ENCODE measurements at regions of chr1 and their contacts with region 1.

Region 1: GRCh38 chr1:214584805-214585766 is 17.9 kb upstream of the CENPF start:
- DNase-seq: peak; percentile 41 to 58
- ATAC-seq: peak; percentile 83 to 89
- H3K4me3 ChIP-seq: no peak overlapping the region
- H3K27ac ChIP-seq: peak overlapping the region; percentile 31 to 74; a peak in 4 of 6 replicates
- H3K4me1 ChIP-seq: peaks cover 38% of the 10 kb centered on the region
- CTCF ChIP-seq: peak; percentile 97
- EP300 ChIP-seq: no peak
- POLR2A ChIP-seq: no peak
- RAD21 ChIP-seq: peak; percentile 97

Region 2: DNA sequence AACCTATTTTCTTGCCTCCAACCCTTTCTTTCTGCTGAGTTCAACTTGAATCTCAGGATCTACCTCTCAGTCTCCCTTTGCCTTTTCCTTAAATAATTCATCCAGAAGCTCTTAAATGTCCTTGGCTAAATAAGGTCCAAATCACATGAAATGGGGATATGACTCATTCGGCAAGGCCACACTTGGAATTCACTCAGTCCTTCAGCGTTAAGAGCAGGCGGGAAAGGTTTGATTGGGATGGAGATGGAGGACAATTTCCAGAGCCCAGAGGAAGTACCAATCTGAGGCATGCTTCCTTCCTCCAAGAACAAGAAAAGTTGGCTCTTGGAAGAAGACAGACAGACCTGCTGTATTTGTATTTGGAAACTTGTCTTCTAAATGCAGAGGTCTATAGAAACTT is 468.8 kb before region 1 on chr1:
- CTCF ChIA-PET with region 1: no interaction called
- POLR2A ChIA-PET with region 1: no interaction called
- DNase-seq: no peak
- ATAC-seq: no peak
- H3K4me3 ChIP-seq: no peak overlapping the region
- H3K27ac ChIP-seq: no peak overlapping the region
- H3K4me1 ChIP-seq: no peaks in the 10 kb centered on the region
- CTCF ChIP-seq: no peak
- EP300 ChIP-seq: no peak
- POLR2A ChIP-seq: no peak
- RAD21 ChIP-seq: no peak

Region 3: DNA sequence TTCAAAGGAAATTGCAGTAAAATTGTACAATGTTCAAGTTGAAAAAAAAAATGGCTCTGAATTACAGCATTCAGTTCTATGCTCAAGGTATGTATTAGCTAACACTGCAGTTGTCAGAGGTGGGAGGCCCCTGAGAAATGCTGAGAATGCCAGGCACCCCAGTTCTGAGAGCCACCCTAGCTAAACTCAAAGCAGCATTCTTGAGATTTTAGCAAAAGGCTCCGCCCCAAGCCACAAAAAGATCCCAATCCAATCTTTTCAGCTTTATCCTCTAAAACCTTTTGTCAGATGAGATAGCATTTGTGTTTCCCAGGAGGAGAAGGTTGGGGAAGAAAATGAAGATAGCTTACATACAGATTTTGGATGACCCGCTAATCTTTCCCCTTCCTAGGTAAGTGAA is 235.3 kb before region 1 on chr1:
- CTCF ChIA-PET with region 1: interaction called, 15 read pairs
- POLR2A ChIA-PET with region 1: no interaction called
- DNase-seq: no peak
- ATAC-seq: no peak
- H3K4me3 ChIP-seq: no peak overlapping the region
- H3K27ac ChIP-seq: no peak overlapping the region
- H3K4me1 ChIP-seq: 0 out of 3 replicates have a peak, but pooled peaks cover 5% of the 10 kb centered on the region
- CTCF ChIP-seq: no peak
- EP300 ChIP-seq: no peak
- POLR2A ChIP-seq: no peak
- RAD21 ChIP-seq: no peak

Region 4: GRCh38 chr1:214386747-214387146 is 198.3 kb before region 1 on chr1:
- CTCF ChIA-PET with region 1: interaction called, 64 read pairs
- POLR2A ChIA-PET with region 1: no interaction called
- DNase-seq: no peak
- ATAC-seq: peak in 1 of 2 experiments; percentile 19; a peak in 1 of 6 replicates
- H3K4me3 ChIP-seq: no peak overlapping the region
- H3K27ac ChIP-seq: no peak overlapping the region
- H3K4me1 ChIP-seq: no peaks in the 10 kb centered on the region
- CTCF ChIP-seq: no peak
- EP300 ChIP-seq: no peak
- POLR2A ChIP-seq: no peak
- RAD21 ChIP-seq: no peak

Region 5: DNA sequence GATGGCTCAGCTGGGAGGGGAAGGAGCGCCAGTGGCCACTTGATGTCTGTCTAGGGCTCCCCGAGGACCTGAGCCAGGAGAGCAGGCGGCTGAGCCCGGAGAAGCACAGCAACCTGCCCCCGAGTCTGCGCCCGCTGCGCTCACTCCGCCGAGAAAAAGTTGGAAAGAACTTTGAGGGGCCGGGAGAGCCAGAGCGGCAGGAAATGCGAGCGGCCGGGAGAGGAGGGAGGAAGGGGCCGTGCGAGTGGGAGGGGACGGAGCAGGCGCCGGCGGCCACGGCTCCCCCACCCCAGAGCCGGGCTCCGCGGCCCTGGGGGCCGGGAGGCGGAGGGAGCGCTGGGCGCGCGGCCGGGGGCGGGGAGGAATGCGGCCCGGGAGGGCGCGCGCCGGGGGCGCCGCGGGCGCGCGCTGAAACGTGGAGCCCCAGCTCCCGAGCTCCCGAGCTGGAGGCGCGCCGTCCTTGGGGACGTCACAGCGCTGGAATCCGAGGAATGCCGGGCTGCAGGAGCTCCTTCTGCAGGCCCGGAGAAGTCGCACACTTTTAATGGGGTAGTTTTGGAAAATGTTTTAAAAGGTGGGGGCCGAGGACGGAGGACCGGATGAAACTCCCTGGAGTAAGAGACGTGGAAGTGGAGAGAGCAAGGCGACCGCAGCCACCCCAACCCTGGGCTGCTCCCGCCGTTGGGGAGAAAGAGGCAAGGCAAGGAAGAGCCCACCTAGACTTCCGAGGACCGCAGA is 33.5 kb before region 1 on chr1 and contains the start of gene PTPN14:
- CTCF ChIA-PET with region 1: interaction called, 116 read pairs
- POLR2A ChIA-PET with region 1: interaction called, 14 read pairs
- DNase-seq: peak; percentile 91 to 94
- ATAC-seq: peak; percentile 83 to 84
- H3K4me3 ChIP-seq: peak within 1 kb of the TSS; percentile 85
- H3K27ac ChIP-seq: peak within 1 kb of the TSS; percentile 93 to 97
- H3K4me1 ChIP-seq: peaks cover 46% of the 10 kb centered on the region
- CTCF ChIP-seq: peak; percentile 17; the same call in 2 of the 3 replicates
- EP300 ChIP-seq: no peak
- POLR2A ChIP-seq: no peak; the same call in 1 of the 2 replicates
- RAD21 ChIP-seq: peak; percentile 14 to 15; a peak in 1 of 5 replicates
- polyA plus RNA-seq, gene PTPN14: 9.9 and 10.0 TPM in 2 replicates